WTC11 (cell line): ENCODE measurements at regions of chr18 and their contacts with region 1.

Region 1: GRCh38 chr18:8982416-8983184 is 119.9 kb upstream of the NDUFV2 start:
- DNase-seq: peak; percentile 39
- ATAC-seq: peak; percentile 73
- H3K4me3 Mint-ChIP-seq: no peak overlapping the region
- H3K27ac Mint-ChIP-seq: no peak overlapping the region; the same call in 1 of the 2 replicates
- H3K4me1 Mint-ChIP-seq: peaks cover 46% of the 10 kb centered on the region
- H3K27me3 Mint-ChIP-seq: no peaks in the 10 kb centered on the region; the same call in 1 of the 2 replicates
- CTCF ChIP-seq: no peak

Region 2: GRCh38 chr18:8654503-8655451 is 327.8 kb before region 1 on chr18:
- CTCF ChIA-PET with region 1: interaction called, 23 read pairs
- POLR2A ChIA-PET with region 1: no interaction called
- DNase-seq: no peak
- ATAC-seq: no peak
- H3K4me3 Mint-ChIP-seq: no peak overlapping the region
- H3K27ac Mint-ChIP-seq: peak overlapping the region; percentile 81
- H3K4me1 Mint-ChIP-seq: peaks cover 19% of the 10 kb centered on the region
- H3K27me3 Mint-ChIP-seq: no peaks in the 10 kb centered on the region
- CTCF ChIP-seq: peak; percentile 37

Region 3: GRCh38 chr18:8661754-8662569 is 320.6 kb before region 1 on chr18:
- CTCF ChIA-PET with region 1: interaction called, 18 read pairs
- POLR2A ChIA-PET with region 1: no interaction called
- DNase-seq: peak; percentile 72
- ATAC-seq: peak; percentile 82
- H3K4me3 Mint-ChIP-seq: peak overlapping the region; percentile 49
- H3K27ac Mint-ChIP-seq: peak overlapping the region; percentile 69
- H3K4me1 Mint-ChIP-seq: peaks cover 45% of the 10 kb centered on the region
- H3K27me3 Mint-ChIP-seq: peaks cover 2% of the 10 kb centered on the region; the same call in 1 of the 2 replicates
- CTCF ChIP-seq: no peak

Region 4: DNA sequence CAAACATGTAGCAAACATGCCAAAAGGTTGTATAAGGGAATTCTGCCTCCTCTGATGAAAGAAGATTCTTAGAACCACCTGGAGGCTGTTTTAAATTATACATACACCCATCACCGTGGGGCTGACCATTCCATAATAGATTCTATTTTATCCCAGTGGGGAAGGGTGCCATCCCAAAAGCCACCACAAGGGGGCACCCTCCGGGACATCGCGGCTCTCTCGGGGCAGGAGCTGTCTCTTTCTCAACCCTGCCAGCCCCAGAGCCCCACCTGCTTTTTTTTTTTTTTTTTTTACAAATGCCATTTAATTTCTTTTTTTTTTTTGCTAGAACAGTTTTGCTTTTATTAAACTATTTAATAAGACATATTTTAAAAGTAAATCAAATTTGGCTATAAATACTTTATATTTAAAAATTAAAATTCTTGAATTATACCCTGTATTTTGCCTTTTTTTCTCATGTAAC is 285.8 kb before region 1 on chr18:
- CTCF ChIA-PET with region 1: interaction called, 21 read pairs
- POLR2A ChIA-PET with region 1: no interaction called
- DNase-seq: peak; percentile 83
- ATAC-seq: peak; percentile 85
- H3K4me3 Mint-ChIP-seq: no peak overlapping the region
- H3K27ac Mint-ChIP-seq: no peak overlapping the region
- H3K4me1 Mint-ChIP-seq: peaks cover 2% of the 10 kb centered on the region; the same call in 1 of the 2 replicates
- H3K27me3 Mint-ChIP-seq: no peaks in the 10 kb centered on the region
- CTCF ChIP-seq: peak; percentile 92

Region 5: GRCh38 chr18:8704361-8705279 is 278.0 kb before region 1 on chr18:
- CTCF ChIA-PET with region 1: interaction called, 28 read pairs
- POLR2A ChIA-PET with region 1: no interaction called
- DNase-seq: peak; percentile 82
- ATAC-seq: peak; percentile 69
- H3K4me3 Mint-ChIP-seq: peak overlapping the region; percentile 80
- H3K27ac Mint-ChIP-seq: peak overlapping the region; percentile 68
- H3K4me1 Mint-ChIP-seq: peaks cover 47% of the 10 kb centered on the region
- H3K27me3 Mint-ChIP-seq: peaks cover 19% of the 10 kb centered on the region
- CTCF ChIP-seq: no peak

Region 6: DNA sequence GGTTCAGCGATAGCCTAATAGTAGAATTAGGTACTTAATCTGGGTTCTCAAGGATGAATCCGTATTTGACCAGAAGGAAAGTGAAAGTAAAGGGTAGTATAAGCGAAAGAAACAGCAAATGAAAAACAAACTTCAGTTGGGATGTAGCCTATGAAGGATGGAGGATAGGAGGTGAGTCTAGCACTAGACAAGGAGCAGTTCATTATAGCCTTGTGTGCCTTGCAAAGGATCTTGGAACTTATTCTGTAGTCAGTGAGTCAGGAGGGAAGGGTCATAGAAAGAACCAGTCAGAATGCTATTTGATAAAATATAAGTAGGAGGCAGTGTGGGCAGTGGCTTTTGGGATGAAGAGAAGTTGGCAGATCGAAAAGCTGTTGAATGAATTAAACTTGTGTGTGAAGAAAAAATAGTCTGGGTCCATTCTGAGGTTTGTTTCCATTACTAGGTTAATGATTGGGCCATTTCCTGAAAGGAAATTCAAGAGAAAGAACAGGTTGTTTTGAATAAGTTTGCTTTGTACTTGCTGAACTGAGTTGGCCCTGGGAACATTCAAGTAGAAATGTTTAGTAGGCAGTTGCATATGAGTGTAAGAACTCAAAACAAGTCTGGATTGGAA is 202.5 kb after region 1 on chr18:
- CTCF ChIA-PET with region 1: no interaction called
- POLR2A ChIA-PET with region 1: no interaction called
- DNase-seq: no peak
- ATAC-seq: no peak
- H3K4me3 Mint-ChIP-seq: no peak overlapping the region
- H3K27ac Mint-ChIP-seq: peak overlapping the region; percentile 31; the same call in 1 of the 2 replicates
- H3K4me1 Mint-ChIP-seq: peaks cover 10% of the 10 kb centered on the region
- H3K27me3 Mint-ChIP-seq: no peaks in the 10 kb centered on the region
- CTCF ChIP-seq: no peak